GM12878 (cell line): ENCODE measurements at regions of chr12 and their contacts with region 1.

Region 1: DNA sequence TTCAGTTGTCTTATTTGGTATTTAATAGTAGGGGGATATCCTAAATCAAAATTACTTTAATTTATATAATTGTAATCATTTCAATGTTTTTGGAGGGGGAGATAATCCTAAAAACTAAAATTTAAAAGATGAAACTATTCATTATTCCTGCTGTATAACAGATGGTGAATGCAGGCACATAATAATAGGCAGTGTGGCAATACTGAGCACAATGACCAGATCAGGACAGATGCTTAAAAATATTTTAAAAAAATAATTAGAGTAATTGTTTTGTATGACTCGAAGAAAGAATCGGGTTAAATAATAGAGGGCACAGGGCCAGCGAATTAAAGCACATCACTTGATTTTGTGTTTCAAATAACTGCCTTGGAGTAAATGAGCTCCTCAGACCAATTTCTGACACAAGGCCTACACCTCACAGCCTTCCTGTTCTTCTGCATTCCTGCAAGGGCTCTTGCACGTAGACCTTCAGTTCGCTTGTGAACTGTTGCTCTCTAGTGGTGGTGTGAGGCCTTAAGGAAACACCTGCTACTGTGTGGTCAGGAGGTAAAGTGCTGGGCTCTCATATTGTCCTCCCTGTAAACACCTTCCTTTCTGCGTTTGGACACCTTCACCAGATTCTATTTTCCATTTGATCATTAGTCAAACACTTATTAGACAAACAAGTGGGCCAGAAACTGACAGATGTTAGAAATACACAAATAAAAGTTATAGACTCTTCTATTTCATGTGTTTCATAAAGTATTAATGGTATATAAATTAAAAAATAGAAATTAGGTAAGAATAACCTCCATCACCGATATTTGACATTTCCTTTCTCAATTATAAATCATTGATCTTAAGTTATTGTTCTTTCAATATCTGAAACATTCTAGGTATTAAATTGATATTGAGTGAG is 29.3 kb upstream of the KLRF1 start:
- DNase-seq: peak; percentile 85
- ATAC-seq: peak; percentile 100
- H3K4me3 ChIP-seq: no peak overlapping the region
- H3K27ac ChIP-seq: no peak overlapping the region
- H3K4me1 ChIP-seq: peaks cover 10% of the 10 kb centered on the region; the same call in 1 of the 2 replicates
- H3K27me3 ChIP-seq: no peaks in the 10 kb centered on the region
- CTCF ChIP-seq: peak; percentile 80 to 87 (median 83)
- EP300 ChIP-seq: no peak
- POLR2A ChIP-seq: no peak
- RAD21 ChIP-seq: peak; percentile 100

Region 2: DNA sequence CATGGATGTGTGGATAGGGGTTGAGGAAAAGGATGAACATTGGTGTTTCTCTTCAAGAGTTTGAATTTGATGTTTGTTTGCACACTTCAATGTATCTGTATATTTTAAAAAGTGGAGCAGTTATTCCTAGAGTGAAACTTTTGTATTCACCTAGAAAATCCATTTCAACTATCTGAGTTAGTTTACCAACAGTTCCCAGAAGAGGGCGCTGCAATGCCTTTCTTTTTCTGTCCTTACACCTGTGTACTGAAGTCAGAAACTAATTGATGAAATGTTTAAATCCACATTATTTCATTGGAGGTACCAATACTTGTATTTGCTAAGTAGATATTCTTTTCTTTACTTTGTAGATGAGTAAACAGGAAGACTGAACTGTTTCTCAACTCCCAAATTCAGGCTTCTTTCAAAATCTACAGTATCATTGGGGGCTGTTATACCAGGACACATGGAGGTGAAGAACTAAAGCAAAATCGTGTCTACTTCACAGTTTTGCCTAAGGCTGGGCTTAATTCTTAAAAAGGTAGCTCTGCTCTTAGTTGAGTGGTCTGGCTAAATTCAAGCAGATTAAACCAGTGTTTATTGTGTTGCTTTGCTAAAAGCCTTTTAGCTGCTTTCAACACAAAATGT is 163.7 kb before region 1 on chr12:
- CTCF ChIA-PET with region 1: interaction called, 14 read pairs
- POLR2A ChIA-PET with region 1: no interaction called
- RAD21 ChIA-PET with region 1: interaction called, 6 read pairs
- SMC1A ChIA-PET with region 1: interaction called, 6 read pairs
- in situ Hi-C with region 1: no loop called
- intact Hi-C with region 1: loop called (anchors 5 kb)
- DNase-seq: no peak
- ATAC-seq: peak; percentile 79
- H3K4me3 ChIP-seq: no peak overlapping the region
- H3K27ac ChIP-seq: no peak overlapping the region
- H3K4me1 ChIP-seq: peaks cover 15% of the 10 kb centered on the region; the same call in 1 of the 2 replicates
- H3K27me3 ChIP-seq: no peaks in the 10 kb centered on the region
- CTCF ChIP-seq: peak; percentile 52 to 71 (median 61); a peak in 5 of 6 replicates
- EP300 ChIP-seq: no peak
- POLR2A ChIP-seq: no peak
- RAD21 ChIP-seq: peak; percentile 91

Region 3: DNA sequence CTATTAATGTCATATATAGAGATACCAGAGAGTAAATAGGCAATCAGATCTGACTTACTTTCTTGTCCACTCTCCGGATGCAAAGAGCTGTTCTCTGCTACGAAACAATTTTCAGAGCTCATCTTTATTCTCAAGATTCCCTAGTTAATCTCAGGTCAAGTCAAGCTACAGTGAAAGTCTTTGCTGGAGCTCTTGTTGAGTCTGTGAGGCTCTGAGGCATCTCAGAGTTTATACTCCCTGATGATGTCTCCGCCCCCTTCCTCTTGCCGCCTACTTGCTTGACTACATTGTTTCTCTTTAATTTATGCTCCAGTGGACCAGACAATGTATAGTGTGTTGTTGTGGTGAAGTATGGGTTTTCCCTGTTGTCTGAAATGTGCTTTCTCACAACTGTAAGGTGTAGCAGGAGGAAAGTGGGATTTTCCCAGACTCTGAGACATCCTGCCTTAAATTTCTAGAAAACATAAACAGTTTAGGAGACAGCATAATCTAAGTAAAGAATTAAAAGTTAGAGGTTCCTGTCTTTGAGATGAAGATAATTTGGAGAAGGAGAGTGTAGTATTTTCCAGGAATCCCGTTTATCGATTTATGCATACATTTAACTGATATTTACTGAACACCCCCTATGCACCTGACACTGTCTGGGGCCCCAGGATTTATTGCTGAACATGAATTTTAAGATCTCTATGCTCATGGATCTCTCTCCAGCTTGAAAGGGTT is 37.1 kb before region 1 on chr12 and contains the start of gene CD69:
- CTCF ChIA-PET with region 1: interaction called, 835 read pairs
- POLR2A ChIA-PET with region 1: interaction called, 12 read pairs
- RAD21 ChIA-PET with region 1: interaction called, 577 read pairs
- SMC1A ChIA-PET with region 1: interaction called, 814 read pairs
- in situ Hi-C with region 1: no loop called
- intact Hi-C with region 1: no loop called
- DNase-seq: peak; percentile 95
- ATAC-seq: peak; percentile 64
- H3K4me3 ChIP-seq: peak within 1 kb of the TSS; percentile 87
- H3K27ac ChIP-seq: peak within 1 kb of the TSS; percentile 76
- H3K4me1 ChIP-seq: peaks cover 18% of the 10 kb centered on the region
- H3K27me3 ChIP-seq: no peaks in the 10 kb centered on the region
- CTCF ChIP-seq: no peak
- EP300 ChIP-seq: peak; percentile 62 to 68; a peak in 3 of 4 replicates
- POLR2A ChIP-seq: peak; percentile 94
- RAD21 ChIP-seq: no peak
- polyA plus RNA-seq, gene CD69: 32.9 to 55.7 TPM

Region 4: DNA sequence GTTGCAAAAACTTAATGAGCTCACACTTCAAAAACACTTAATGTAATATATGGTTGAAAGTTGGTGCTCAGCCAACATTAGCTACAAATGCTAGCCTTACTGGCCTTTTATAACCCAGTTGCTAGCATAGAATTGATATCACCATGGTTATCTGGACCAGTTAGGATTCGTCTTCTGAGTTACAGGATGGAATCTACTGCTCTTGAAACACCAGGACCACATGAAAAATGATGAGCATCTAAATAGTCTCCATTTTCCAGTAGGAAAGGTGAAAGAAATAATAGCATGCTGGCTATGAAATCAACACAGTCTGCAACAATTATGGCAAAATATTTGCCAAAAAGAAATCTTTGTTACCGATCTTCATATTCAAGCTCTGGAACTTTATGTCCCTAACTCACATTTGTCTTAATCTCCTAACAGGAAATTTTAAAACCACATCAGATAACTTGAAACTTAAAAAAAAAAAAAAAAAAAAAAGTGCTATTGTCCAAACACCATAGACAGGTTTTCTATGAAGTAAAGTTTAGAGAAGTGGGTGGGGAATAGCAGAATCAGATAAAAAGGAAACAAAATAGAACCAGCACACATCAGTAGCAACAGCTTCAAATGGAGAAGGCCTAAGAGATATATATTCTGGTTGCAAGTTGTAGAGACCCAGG is 24.6 kb before region 1 on chr12:
- CTCF ChIA-PET with region 1: interaction called, 52 read pairs
- POLR2A ChIA-PET with region 1: no interaction called
- RAD21 ChIA-PET with region 1: interaction called, 60 read pairs
- SMC1A ChIA-PET with region 1: interaction called, 68 read pairs
- in situ Hi-C with region 1: no loop called
- intact Hi-C with region 1: no loop called
- DNase-seq: no peak
- ATAC-seq: no peak
- H3K4me3 ChIP-seq: no peak overlapping the region
- H3K27ac ChIP-seq: no peak overlapping the region
- H3K4me1 ChIP-seq: peaks cover 7% of the 10 kb centered on the region; the same call in 1 of the 2 replicates
- H3K27me3 ChIP-seq: no peaks in the 10 kb centered on the region
- CTCF ChIP-seq: no peak
- EP300 ChIP-seq: no peak
- POLR2A ChIP-seq: no peak
- RAD21 ChIP-seq: no peak

Region 5: GRCh38 chr12:9786726-9787717 is 10.9 kb before region 1 on chr12:
- CTCF ChIA-PET with region 1: interaction called, 8 read pairs
- POLR2A ChIA-PET with region 1: no interaction called
- RAD21 ChIA-PET with region 1: interaction called, 5 read pairs
- SMC1A ChIA-PET with region 1: interaction called, 10 read pairs
- in situ Hi-C with region 1: no loop called
- intact Hi-C with region 1: no loop called
- DNase-seq: no peak
- ATAC-seq: no peak
- H3K4me3 ChIP-seq: no peak overlapping the region
- H3K27ac ChIP-seq: no peak overlapping the region
- H3K4me1 ChIP-seq: no peaks in the 10 kb centered on the region
- H3K27me3 ChIP-seq: no peaks in the 10 kb centered on the region; a peak in 1 of 4 replicates
- CTCF ChIP-seq: no peak
- EP300 ChIP-seq: no peak
- POLR2A ChIP-seq: no peak
- RAD21 ChIP-seq: no peak

Region 6: DNA sequence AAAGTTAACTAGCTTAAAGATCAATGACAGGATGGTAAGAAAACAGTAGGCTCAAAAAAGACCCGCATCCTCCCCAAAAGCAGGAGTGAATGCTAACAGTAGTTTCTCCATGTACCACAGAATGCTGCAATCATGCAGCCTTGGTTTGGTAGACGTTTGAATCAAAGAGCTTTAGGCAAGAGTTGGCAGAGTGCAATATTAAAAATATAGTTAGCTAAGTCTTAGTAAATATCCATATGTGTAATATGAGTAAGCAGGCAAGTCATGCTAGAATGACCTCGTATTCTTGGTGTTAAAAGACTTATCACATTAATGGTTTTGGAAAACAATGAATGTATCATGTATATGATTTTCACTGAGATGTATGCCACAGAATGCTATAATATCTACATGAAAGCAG is 10.5 kb after region 1 on chr12:
- CTCF ChIA-PET with region 1: interaction called, 17 read pairs
- POLR2A ChIA-PET with region 1: no interaction called
- RAD21 ChIA-PET with region 1: interaction called, 15 read pairs
- SMC1A ChIA-PET with region 1: interaction called, 6 read pairs
- in situ Hi-C with region 1: no loop called
- intact Hi-C with region 1: no loop called
- DNase-seq: no peak
- ATAC-seq: no peak
- H3K4me3 ChIP-seq: no peak overlapping the region
- H3K27ac ChIP-seq: no peak overlapping the region
- H3K4me1 ChIP-seq: no peaks in the 10 kb centered on the region
- H3K27me3 ChIP-seq: no peaks in the 10 kb centered on the region; a peak in 1 of 4 replicates
- CTCF ChIP-seq: no peak
- EP300 ChIP-seq: no peak
- POLR2A ChIP-seq: no peak
- RAD21 ChIP-seq: no peak